Activated CD4-positive, alpha-beta T cell treated with anti-CD3 and anti-CD28 coated beads, Interleukin-2, amount 10 ng/mL, durations not matched to agents 7 days and 5 days (primary cell): ENCODE measurements at regions of chr22 and their contacts with region 1.

Region 1: GRCh38 chr22:17171313-17172171 is 12.5 kb upstream of the HDHD5 start:
- DNase-seq: peak; percentile 76
- H3K4me3 Mint-ChIP-seq: peak overlapping the region; percentile 81
- H3K27ac Mint-ChIP-seq: peak overlapping the region; percentile 76
- H3K4me1 Mint-ChIP-seq: peaks cover 7% of the 10 kb centered on the region
- H3K27me3 Mint-ChIP-seq: peaks cover 4% of the 10 kb centered on the region

Region 2: DNA sequence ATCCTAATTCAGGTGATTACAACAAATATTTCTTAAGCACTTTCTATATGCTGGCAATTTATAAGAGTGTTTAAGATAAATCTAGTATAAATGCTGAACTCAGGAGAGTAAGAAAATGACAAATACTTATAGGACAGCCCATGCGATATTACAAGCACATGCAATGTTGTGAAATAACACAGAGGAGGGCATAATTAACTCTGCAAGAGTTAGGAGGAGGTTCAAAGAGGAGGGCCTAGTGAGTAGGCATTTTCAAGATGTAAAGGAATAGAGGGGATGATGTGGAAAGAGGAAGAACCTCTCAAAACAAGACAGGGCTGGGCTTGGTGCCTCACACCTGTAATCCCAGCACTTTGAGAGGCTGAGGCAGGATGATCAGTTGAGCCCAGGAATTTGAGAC is 123.9 kb before region 1 on chr22:
- CTCF ChIA-PET with region 1: no interaction called
- POLR2A ChIA-PET with region 1: no interaction called
- DNase-seq: no peak
- H3K4me3 Mint-ChIP-seq: no peak overlapping the region
- H3K27ac Mint-ChIP-seq: no peak overlapping the region
- H3K4me1 Mint-ChIP-seq: no peaks in the 10 kb centered on the region
- H3K27me3 Mint-ChIP-seq: peaks cover 2% of the 10 kb centered on the region

Region 3: GRCh38 chr22:17095538-17095937 is 76.0 kb before region 1 on chr22:
- CTCF ChIA-PET with region 1: interaction called, 11 read pairs
- POLR2A ChIA-PET with region 1: no interaction called
- DNase-seq: no peak
- H3K4me3 Mint-ChIP-seq: no peak overlapping the region
- H3K27ac Mint-ChIP-seq: no peak overlapping the region
- H3K4me1 Mint-ChIP-seq: peaks cover 88% of the 10 kb centered on the region
- H3K27me3 Mint-ChIP-seq: no peaks in the 10 kb centered on the region

Region 4: DNA sequence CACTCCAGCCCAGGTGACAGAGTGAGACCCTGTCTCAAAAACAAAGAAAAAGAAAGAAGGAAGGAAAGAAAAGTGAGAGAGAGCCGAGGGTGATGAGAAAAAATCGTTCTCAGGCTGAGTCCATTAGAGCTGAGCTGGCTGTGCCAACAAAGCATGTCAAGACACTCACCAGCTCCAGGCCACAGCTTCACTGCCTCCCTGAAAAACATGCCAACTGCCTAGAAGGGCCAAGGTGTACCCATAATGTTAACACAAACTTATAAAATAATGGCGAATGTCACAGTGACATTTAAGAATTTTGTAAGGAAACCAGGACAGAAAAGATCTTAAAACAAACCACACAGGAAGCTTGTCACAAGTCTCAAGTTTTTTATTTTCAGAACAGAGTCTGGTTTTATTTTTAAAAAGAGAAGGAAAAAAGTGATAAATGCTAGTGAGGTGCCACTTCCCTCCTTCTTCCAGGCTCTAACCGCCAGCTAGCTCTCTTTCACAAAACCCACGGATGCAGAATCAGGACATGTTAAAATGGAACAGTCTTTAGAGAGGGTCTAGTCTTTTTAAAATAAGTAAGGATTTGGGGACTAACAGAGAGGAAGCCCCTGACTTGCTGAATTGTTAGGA is 55.5 kb before region 1 on chr22:
- CTCF ChIA-PET with region 1: interaction called, 10 read pairs
- POLR2A ChIA-PET with region 1: no interaction called
- DNase-seq: no peak
- H3K4me3 Mint-ChIP-seq: peak overlapping the region; percentile 7
- H3K27ac Mint-ChIP-seq: peak overlapping the region; percentile 84
- H3K4me1 Mint-ChIP-seq: peaks cover 54% of the 10 kb centered on the region
- H3K27me3 Mint-ChIP-seq: peaks cover 5% of the 10 kb centered on the region

Region 5: DNA sequence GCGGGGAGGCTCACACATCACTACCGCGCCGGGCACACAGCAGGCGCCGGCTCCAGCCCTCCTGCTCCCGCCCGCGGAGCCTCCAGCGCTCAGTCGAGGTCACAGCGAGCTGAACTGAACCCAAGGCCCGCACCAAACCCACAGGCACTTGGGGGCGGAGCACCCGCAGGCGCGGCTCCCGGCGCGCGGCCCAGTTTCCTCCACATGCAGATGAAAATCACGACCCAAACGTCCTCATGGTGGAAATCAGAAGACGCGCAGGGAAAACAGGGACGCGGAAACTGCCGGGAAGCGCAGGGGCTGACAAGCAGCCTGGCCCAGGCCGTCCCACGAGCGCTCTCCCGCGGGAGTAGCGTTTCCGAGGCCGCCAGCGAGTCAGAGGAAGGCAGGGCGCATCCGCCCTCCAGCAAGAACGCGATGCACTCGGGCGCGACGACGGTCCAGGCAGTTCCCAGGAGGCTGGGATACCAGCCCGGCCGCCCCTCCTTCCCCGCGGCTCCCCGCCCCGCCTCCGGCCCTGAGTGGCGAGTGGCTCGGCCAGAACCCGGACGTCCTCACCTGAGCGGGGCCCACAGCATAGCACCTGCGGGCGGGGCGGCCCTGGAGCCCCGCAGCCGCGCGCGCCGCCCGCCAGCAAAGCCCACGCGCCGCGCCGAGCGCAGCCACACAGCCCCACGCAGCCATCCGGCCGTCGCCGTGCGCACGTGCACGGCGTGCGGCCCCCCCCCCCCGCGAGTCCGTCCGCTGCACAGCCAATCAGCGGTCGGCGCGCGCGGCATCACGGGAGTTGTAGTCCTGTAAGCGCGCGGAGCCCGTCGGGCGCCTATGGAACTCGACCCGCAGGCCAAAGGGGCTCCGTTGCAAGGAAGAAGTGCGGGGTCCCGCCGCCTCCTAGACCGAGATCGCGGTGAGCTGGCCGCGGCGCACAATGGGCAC is 12.7 kb before region 1 on chr22 and contains the start of gene HDHD5:
- CTCF ChIA-PET with region 1: interaction called, 44 read pairs
- POLR2A ChIA-PET with region 1: no interaction called
- DNase-seq: peak; percentile 88
- H3K4me3 Mint-ChIP-seq: peak within 1 kb of the TSS; percentile 78
- H3K27ac Mint-ChIP-seq: peak within 1 kb of the TSS; percentile 84
- H3K4me1 Mint-ChIP-seq: peaks cover 35% of the 10 kb centered on the region
- H3K27me3 Mint-ChIP-seq: no peaks in the 10 kb centered on the region
- total RNA-seq, gene HDHD5: 30.9 to 37.1 TPM

Region 6: GRCh38 chr22:17258015-17258787 is 86.7 kb after region 1 on chr22:
- CTCF ChIA-PET with region 1: interaction called, 12 read pairs
- POLR2A ChIA-PET with region 1: no interaction called
- DNase-seq: peak; percentile 82
- H3K4me3 Mint-ChIP-seq: peak overlapping the region; percentile 25
- H3K27ac Mint-ChIP-seq: peak overlapping the region; percentile 88
- H3K4me1 Mint-ChIP-seq: peaks cover 38% of the 10 kb centered on the region
- H3K27me3 Mint-ChIP-seq: no peaks in the 10 kb centered on the region

Region 7: GRCh38 chr22:17501679-17502285 is 330.2 kb after region 1 on chr22:
- CTCF ChIA-PET with region 1: interaction called, 34 read pairs
- POLR2A ChIA-PET with region 1: no interaction called
- DNase-seq: peak; percentile 59
- H3K4me3 Mint-ChIP-seq: no peak overlapping the region
- H3K27ac Mint-ChIP-seq: no peak overlapping the region
- H3K4me1 Mint-ChIP-seq: no peaks in the 10 kb centered on the region
- H3K27me3 Mint-ChIP-seq: peaks cover 2% of the 10 kb centered on the region